Dorsolateral prefrontal cortex (tissue), 120 donors: ENCODE measurements at regions of chr12 and their contacts with region 1.

Region 1: DNA sequence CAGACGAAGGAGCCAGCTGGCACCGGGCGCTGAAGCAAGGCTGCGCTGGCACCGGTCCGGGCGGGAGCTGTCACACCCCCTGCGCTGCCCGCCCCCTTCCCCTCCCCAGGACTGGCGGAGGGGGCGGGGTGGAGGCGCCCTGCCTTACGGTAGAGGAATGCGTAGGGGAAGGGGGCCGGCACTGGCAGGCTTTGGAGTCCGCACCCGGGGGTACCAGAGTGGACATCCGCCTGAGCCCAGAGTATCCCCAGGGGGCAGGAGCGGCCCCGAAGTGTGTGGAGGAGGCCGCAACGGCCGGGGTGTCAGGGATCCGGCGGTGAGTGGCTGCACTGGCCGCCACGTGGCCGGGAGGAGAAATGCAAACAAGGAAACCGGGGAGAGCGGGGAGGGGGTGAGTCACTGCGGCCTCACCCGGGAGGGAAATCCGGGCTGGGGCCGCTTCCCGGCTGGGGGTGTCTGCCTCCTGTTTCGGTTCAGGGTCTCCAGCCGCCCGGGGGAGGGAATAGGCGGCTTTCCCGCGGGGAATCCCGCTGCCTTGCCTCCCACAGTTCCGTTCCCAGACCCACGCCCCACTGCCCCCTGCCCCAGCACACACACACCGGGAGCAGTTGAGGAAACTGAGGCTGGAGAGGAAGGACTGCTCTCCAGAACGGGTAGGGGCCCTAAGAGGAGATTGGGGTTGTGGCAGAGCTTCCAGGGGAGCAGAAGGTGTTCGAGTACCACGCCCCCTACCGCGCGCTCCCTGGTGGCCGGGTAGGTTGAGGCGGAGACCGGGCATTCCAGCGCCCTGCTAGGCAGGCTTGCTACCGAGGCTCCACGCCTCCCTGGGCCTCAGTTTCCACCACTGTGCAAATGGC is at the start of gene RAPGEF3:
- DNase-seq: peak; percentile 69 to 93 (median 88)
- H3K4me3 ChIP-seq: peak within 1 kb of the TSS; percentile 46 to 91 (median 73)
- H3K27ac ChIP-seq: peak within 1 kb of the TSS; percentile 74 to 97 (median 95)
- H3K27me3 ChIP-seq: no peaks in the 10 kb centered on the region
- CTCF ChIP-seq: peak in 55 of 56 donors; percentile 31 to 78 (median 57)
- total RNA-seq, gene RAPGEF3: 33.3 to 206 (median 93.7) TPM

Region 2: DNA sequence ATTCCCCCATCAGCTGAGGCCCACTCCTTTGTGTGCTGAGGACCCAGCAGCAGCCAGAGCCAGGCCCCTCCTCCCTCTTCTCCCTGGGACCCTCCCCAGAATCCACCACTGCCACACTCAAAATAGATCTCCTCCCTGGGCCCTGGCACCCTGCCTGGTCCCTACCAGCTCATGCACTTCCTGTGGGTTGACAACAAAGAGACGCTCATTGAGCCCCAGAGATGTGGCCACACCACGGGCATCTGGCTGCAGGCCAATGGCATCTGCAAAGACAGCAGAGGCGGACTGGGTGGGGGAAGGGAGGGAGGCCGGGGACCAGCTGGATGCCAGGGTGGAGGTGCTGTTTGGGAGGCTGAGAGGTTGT is 17.7 kb before region 1 on chr12:
- intact Hi-C with region 1: loop called in 1 of 2 experiments (anchors 1 kb)
- DNase-seq: peak; percentile 54 to 99 (median 96)
- H3K4me3 ChIP-seq: peak overlapping the region in 5 of 59 donors; percentile 5 to 30 (median 21)
- H3K27ac ChIP-seq: peak overlapping the region; percentile 61 to 98 (median 95)
- H3K27me3 ChIP-seq: no peaks in the 10 kb centered on the region
- CTCF ChIP-seq: peak in 2 of 56 donors; percentile 13 to 39

Region 3: DNA sequence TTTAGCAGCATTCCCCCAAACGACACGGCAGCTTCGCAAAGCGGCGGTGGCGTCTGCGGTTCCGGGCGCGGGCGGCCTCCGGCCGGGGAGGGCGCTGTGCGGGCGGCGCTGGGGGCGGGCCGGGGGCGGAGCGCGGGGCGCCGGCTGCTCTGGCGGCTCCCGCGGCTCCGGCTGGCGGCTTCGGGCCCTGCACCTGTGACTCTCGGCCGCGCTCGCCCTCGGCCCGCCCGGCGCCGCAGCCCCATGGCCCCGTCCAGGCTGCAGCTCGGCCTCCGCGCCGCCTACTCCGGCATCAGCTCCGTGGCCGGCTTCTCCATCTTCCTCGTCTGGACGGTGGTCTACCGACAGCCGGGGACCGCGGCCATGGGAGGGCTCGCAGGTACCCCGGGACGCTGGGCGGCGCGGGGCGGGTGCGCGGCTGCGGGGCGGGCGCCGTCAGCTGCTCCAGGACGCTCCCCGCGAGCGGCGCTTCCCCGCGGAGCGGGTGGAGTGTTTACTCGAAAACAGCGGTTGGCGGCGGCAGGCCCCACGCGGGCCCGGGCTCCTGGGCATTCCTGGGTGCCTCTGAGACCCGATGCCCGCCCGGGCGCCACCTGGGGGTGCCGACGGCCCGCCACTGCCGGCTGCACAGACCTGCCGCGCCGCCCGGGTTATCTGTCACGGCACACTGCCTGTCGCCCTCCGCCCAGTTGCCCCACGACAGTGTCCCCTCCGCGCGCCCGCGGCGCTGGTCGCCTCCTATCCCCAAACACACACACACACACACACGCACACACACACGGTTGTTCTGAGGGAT is 14.2 kb after region 1 on chr12 and contains the start of gene SLC48A1:
- intact Hi-C with region 1: loop called (anchors 2 kb)
- DNase-seq: peak in 8 of 10 donors; percentile 60 to 89 (median 76)
- H3K4me3 ChIP-seq: peak within 1 kb of the TSS; percentile 73 to 99 (median 90)
- H3K27ac ChIP-seq: peak within 1 kb of the TSS; percentile 92 to 100 (median 99)
- H3K27me3 ChIP-seq: no peaks in the 10 kb centered on the region
- CTCF ChIP-seq: peak in 46 of 56 donors; percentile 4 to 55 (median 32)
- total RNA-seq, gene SLC48A1: 71.9 to 264 (median 114) TPM